Activated CD4-positive, alpha-beta memory T cell treated with anti-CD3 and anti-CD28 coated beads for 36 hours (primary cell): ENCODE measurements at regions of chr3 and their contacts with region 1.

Region 1: GRCh38 chr3:141452036-141452435 is 34.8 kb upstream of the RASA2 start:
- DNase-seq: peak; percentile 50
- H3K4me3 Mint-ChIP-seq: no peak overlapping the region
- H3K27ac Mint-ChIP-seq: no peak overlapping the region
- H3K4me1 Mint-ChIP-seq: peaks cover 35% of the 10 kb centered on the region
- H3K27me3 Mint-ChIP-seq: no peaks in the 10 kb centered on the region

Region 2: DNA sequence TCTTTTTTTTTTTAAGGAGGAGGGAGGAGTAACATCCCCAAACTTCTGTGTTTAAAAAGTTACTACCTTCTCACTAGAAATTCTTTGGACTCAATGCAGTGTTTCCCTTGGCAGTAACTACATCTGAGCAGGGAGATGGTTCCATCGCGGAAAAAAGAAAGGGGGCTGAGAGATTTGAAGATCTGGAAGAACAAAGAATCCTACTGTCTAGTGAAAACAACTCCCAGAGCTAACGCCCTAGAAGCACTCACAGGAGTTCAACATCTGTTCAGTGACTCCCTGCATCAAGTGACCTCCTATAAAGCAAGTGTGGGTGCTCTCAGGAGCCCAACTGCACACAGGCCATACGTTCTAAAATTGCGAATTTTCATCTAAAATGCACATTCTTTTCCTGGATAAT is 287.2 kb before region 1 on chr3:
- CTCF ChIA-PET with region 1: no interaction called
- POLR2A ChIA-PET with region 1: no interaction called
- intact Hi-C with region 1: no loop called
- DNase-seq: no peak
- H3K4me3 Mint-ChIP-seq: no peak overlapping the region
- H3K27ac Mint-ChIP-seq: no peak overlapping the region
- H3K4me1 Mint-ChIP-seq: no peaks in the 10 kb centered on the region
- H3K27me3 Mint-ChIP-seq: peaks cover 3% of the 10 kb centered on the region

Region 3: DNA sequence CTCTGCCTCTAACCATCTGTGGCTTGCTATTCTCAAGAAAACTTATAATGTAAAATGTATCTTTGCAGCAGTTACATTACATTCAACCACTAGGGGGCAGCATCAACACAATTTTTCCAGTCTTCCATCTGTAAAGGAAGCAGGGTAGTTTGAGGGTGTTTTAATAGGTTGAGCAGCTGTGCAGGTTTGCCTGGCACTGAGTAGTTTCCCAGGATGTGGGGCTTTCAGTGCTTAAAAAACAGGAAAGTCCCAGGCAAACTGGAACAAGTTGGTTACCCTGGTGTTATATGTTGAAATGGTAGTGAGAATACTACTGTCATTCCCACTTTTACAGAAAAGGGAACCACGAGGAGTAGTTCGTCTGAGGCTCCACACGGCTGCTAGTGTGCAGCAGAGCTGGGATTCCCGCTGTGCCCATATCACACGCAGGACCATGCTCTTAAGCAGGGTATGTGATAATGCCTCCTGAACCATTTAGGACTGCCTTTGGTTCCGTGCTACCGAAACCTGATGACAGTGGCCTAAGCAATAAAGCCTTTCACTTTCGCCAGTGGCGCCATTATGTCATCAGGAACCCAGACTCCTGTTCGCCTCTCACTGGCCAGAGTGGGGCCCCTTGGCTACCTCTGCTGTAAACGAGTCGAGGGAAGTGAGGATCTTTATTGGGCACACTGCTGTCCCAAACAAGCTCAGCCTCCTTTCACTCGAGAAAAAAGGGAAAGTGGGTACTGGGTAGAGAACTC is 148.4 kb before region 1 on chr3:
- CTCF ChIA-PET with region 1: interaction called, 200 read pairs
- POLR2A ChIA-PET with region 1: interaction called, 4 read pairs
- intact Hi-C with region 1: loop called (anchors 1 kb)
- DNase-seq: peak; percentile 56
- H3K4me3 Mint-ChIP-seq: no peak overlapping the region
- H3K27ac Mint-ChIP-seq: no peak overlapping the region
- H3K4me1 Mint-ChIP-seq: peaks cover 44% of the 10 kb centered on the region
- H3K27me3 Mint-ChIP-seq: no peaks in the 10 kb centered on the region

Region 4: DNA sequence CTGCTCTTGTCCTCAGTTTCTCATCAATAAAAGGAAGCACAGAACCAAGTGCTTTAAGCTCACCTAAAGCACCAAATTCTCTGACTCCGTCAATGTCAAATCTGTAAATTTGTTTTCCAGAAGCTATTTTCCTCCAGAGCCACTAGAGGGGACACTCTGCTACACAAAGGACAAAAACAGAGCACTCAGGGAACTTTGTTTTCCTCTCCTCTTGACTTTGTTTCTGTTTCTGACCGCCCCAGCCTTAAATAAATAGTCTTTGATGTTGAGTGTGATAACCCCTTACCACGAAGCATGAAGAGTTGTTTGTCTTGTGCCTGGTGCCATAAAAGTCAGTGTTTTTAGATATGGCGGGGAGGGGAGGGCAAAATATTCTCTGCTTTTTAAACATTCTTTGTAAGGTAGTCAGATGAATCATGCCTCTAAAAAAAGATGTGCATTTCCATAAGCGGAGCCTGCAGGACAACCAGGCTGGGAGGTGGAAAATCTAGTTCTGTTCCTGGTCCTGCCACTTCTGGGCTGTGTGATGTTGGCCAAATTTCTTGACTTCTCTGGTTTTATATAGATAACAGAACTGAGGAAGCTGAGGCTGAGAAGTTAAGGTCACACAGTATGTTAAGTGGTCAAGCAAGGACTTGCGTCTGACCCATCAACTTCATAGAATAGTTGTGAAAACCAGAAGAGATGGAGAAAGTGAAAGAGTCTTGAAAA is 91.0 kb before region 1 on chr3:
- CTCF ChIA-PET with region 1: interaction called, 132 read pairs
- POLR2A ChIA-PET with region 1: no interaction called
- intact Hi-C with region 1: loop called (anchors 1 kb)
- DNase-seq: no peak
- H3K4me3 Mint-ChIP-seq: peak overlapping the region; percentile 30
- H3K27ac Mint-ChIP-seq: no peak overlapping the region
- H3K4me1 Mint-ChIP-seq: peaks cover 10% of the 10 kb centered on the region
- H3K27me3 Mint-ChIP-seq: peaks cover 1% of the 10 kb centered on the region

Region 5: GRCh38 chr3:141402476-141403171 is 49.4 kb before region 1 on chr3:
- CTCF ChIA-PET with region 1: interaction called, 11 read pairs
- POLR2A ChIA-PET with region 1: no interaction called
- intact Hi-C with region 1: no loop called
- DNase-seq: peak; percentile 60
- H3K4me3 Mint-ChIP-seq: peak overlapping the region; percentile 88
- H3K27ac Mint-ChIP-seq: peak overlapping the region; percentile 92
- H3K4me1 Mint-ChIP-seq: peaks cover 67% of the 10 kb centered on the region
- H3K27me3 Mint-ChIP-seq: no peaks in the 10 kb centered on the region

Region 6: GRCh38 chr3:141477224-141477623 is 25.2 kb after region 1 on chr3:
- CTCF ChIA-PET with region 1: no interaction called
- POLR2A ChIA-PET with region 1: no interaction called
- intact Hi-C with region 1: no loop called
- DNase-seq: no peak
- H3K4me3 Mint-ChIP-seq: no peak overlapping the region
- H3K27ac Mint-ChIP-seq: no peak overlapping the region
- H3K4me1 Mint-ChIP-seq: peaks cover 22% of the 10 kb centered on the region
- H3K27me3 Mint-ChIP-seq: no peaks in the 10 kb centered on the region

Region 7: DNA sequence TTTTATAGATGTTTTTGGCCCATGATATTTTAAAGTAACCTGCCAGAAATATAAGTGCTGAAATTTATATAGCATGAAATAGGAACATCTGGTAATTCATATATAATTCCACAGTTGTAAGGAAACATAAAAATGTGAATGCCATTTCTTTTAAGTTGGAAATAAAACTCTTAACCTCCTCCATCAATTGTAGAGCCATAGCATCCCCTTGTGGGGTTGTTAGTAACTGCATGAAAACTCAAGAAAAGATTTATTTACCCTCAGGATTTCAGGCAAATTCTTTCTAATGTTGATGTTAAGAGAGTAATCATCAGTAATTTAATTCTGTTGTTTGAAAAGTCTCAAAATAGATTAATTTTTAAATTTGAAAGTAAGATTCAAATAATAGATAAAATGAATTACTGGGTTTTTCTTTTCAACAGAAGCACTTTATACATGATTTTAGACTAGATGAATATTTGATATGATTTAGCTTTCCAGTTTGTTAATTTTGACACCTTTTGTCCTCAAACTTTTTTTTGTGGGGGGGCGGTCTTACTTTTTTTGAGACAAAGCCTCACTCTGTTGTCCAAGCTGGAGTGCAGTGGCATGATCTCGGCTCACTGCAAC is 109.5 kb after region 1 on chr3:
- CTCF ChIA-PET with region 1: interaction called, 173 read pairs
- POLR2A ChIA-PET with region 1: no interaction called
- intact Hi-C with region 1: no loop called
- DNase-seq: no peak
- H3K4me3 Mint-ChIP-seq: no peak overlapping the region
- H3K27ac Mint-ChIP-seq: peak overlapping the region; percentile 40
- H3K4me1 Mint-ChIP-seq: peaks cover 25% of the 10 kb centered on the region
- H3K27me3 Mint-ChIP-seq: no peaks in the 10 kb centered on the region

Region 8: DNA sequence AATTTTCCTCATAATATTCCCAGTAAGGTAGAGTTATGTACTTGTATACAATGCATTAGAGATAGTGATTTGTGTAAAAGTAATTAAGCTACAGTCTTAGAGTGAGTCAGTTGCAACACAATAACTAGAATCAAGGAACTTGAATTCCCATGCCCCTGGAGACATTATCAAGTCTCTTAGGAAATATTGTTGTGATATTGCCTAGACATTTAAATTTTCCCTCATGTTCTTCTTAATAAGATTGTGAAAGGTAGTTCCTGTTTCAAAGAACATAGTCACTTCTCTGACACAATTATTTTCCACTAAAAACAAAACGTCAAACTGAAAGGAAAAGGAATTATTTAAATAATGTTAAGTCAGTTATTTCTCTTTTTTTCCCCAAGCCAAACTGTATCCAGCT is 411.5 kb after region 1 on chr3:
- CTCF ChIA-PET with region 1: no interaction called
- POLR2A ChIA-PET with region 1: no interaction called
- intact Hi-C with region 1: no loop called
- DNase-seq: no peak
- H3K4me3 Mint-ChIP-seq: no peak overlapping the region
- H3K27ac Mint-ChIP-seq: no peak overlapping the region
- H3K4me1 Mint-ChIP-seq: peaks cover 2% of the 10 kb centered on the region
- H3K27me3 Mint-ChIP-seq: no peaks in the 10 kb centered on the region